Psoas muscle (tissue), 8 donors: ENCODE measurements at regions of chr1 and their contacts with region 1.

Region 1: GRCh38 chr1:200729863-200730262 is 8.8 kb upstream of the CAMSAP2 start:
- DNase-seq: no peak
- ATAC-seq: no peak
- H3K4me3 ChIP-seq: no peak overlapping the region
- H3K27ac ChIP-seq: no peak overlapping the region
- H3K4me1 ChIP-seq: no peaks in the 10 kb centered on the region
- H3K27me3 ChIP-seq: no peaks in the 10 kb centered on the region
- CTCF ChIP-seq: no peak

Region 2: DNA sequence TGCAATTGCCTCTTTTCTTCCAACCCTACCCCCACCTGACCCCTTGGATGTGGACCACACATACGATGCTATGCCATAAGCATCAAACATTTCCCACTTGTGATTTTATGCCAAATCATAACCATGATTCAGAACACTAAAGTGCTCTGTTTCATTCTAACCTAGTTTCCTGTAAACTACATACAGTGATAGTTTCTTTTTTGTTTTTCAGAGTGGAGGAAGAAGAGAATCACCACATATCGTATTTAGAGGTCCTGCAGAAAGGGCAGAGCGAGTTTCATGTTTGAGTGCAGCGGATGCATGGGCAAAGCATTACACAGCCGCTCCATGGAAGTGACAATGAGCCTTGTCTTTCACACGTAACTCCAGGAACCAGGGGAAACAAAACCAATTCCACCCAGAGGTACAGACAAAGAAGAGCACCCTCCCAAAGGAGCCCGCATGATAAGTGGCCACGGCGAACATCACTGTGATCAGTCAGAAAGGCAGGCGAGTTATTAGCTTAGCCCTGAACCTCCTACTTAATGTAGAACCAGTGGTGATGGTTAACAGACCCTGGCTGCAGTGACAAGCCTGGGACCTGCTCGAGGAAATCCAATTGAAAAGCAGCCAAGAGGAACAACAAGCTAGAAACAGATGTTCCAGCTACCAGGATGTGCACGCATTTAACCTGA is 256.0 kb before region 1 on chr1:
- intact Hi-C with region 1: no loop called
- DNase-seq: no peak
- ATAC-seq: no peak
- H3K4me3 ChIP-seq: no peak overlapping the region
- H3K27ac ChIP-seq: no peak overlapping the region
- H3K4me1 ChIP-seq: peaks cover 3% of the 10 kb centered on the region
- H3K27me3 ChIP-seq: peaks cover 0 to 5% (median 4%) of the 10 kb centered on the region in 3 donors
- CTCF ChIP-seq: no peak

Region 3: DNA sequence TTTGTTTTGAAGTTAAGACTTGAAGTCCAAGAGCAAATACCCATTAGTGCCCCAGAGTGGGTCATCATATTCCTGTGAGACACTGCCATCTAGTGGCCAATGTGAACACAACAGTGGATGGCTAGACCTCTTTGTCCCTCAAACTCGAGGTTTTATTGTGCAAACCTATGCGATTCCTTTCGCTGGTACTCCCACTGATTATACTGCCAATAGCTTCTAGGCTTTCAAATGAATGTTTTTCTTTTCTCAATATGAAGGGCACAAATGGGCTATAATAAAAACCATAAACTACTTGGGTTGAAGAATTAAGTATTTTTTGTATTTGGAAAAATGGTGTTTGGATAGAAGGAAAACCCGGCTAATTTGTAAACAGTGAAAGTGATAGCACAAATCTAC is 219.6 kb before region 1 on chr1:
- intact Hi-C with region 1: no loop called
- DNase-seq: peak in 1 of 2 donors; percentile 31
- ATAC-seq: peak; percentile 68 to 86 (median 77)
- H3K4me3 ChIP-seq: no peak overlapping the region
- H3K27ac ChIP-seq: no peak overlapping the region
- H3K4me1 ChIP-seq: no peaks in the 10 kb centered on the region
- H3K27me3 ChIP-seq: peaks cover 0 to 2% (median 0%) of the 10 kb centered on the region in 3 donors
- CTCF ChIP-seq: peak; percentile 95

Region 4: DNA sequence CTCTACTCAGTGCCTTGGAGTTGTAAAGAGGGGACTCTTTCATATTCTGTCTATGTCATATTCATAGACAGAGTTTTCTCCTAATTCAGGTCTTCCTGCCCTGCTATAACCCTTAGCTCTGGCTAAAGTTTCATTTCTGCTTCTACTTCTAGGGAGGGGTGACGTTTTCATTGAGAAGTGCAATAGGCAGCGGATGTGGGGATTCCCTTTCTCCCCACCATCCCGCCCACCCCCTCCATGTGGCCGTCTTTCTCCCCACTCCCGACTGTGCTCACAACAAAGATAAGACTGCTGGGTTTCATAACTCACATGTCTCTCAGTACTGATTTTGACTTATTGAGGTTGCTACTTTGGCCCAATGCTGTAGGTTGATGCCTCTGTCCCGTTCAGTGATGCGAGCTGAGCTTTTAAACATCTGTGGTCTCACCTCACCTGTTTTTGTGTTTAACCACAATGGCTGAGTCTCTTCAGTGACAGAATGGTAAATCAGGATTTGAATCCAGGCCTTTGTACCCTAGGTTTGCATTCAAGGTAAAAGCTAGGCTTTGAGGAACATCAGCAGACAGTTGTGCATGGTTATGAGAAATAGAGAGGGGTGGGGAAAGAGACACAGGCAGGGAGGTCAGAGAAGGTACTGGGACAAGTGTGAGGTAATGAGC is 101.5 kb before region 1 on chr1:
- intact Hi-C with region 1: no loop called
- DNase-seq: no peak
- ATAC-seq: no peak
- H3K4me3 ChIP-seq: no peak overlapping the region
- H3K27ac ChIP-seq: no peak overlapping the region
- H3K4me1 ChIP-seq: no peaks in the 10 kb centered on the region
- H3K27me3 ChIP-seq: no peaks in the 10 kb centered on the region
- CTCF ChIP-seq: no peak

Region 5: GRCh38 chr1:200674838-200675587 is 54.9 kb before region 1 on chr1:
- intact Hi-C with region 1: loop called in 1 of 2 experiments (anchors 5 kb)
- DNase-seq: no peak
- ATAC-seq: no peak
- H3K4me3 ChIP-seq: no peak overlapping the region
- H3K27ac ChIP-seq: no peak overlapping the region
- H3K4me1 ChIP-seq: peaks cover 10% of the 10 kb centered on the region
- H3K27me3 ChIP-seq: no peaks in the 10 kb centered on the region
- CTCF ChIP-seq: no peak